ENCODE measurements at regions of chr7 and their contacts with region 1.

Region 1: DNA sequence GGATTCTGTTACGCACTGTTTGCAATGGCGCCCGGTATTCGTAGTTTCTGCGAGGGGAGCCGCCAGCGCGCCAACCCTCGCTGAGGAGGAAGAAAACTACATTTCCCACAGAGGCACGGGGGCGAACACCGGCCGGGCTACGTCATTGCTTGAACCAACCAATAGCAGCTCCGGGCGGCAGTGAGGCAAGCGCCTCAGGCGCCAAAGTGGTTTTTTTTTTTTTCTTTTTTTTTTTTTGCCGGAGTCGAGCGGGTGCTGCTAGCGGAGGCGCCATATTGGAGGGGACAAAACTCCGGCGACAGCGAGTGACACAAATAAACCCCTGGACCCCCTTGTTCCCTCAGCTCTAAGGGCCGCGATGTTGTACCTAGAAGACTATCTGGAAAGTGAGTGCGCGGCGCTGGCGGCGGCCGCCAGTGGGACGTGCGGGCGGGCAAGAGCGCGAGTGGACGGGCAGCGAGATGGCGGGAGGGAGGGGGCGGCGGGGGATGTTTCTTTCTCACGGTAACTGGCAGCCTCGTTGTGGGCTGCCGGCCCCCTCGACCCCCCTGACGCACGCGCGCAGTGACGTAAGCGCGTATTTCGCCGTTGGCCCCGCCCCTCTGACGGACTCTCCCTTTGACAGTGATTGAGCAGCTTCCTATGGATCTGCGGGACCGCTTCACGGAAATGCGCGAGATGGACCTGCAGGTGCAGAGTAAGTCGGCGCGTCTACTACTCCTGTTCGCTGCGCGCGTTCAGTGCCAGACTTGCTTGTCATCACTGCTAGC is at the start of gene ING3:
- DNase-seq: peak; percentile 94 to 100 (median 98)
- ATAC-seq: peak; percentile 85
- H3K4me3 ChIP-seq: peak within 1 kb of the TSS; percentile 71
- H3K4me3 Mint-ChIP-seq: peak within 1 kb of the TSS; percentile 98
- H3K27ac ChIP-seq: peak within 1 kb of the TSS; percentile 96 to 98
- H3K27ac Mint-ChIP-seq: peak within 1 kb of the TSS; percentile 96
- H3K4me1 ChIP-seq: peaks cover 5% of the 10 kb centered on the region
- H3K4me1 Mint-ChIP-seq: peaks cover 32% of the 10 kb centered on the region
- H3K27me3 ChIP-seq: peaks cover 0 to 3% of the 10 kb centered on the region in 2 experiments
- H3K27me3 Mint-ChIP-seq: peaks cover 9% of the 10 kb centered on the region
- CTCF ChIP-seq: no peak
- total RNA-seq, gene ING3: 37.9 to 39.3 TPM

Region 2: DNA sequence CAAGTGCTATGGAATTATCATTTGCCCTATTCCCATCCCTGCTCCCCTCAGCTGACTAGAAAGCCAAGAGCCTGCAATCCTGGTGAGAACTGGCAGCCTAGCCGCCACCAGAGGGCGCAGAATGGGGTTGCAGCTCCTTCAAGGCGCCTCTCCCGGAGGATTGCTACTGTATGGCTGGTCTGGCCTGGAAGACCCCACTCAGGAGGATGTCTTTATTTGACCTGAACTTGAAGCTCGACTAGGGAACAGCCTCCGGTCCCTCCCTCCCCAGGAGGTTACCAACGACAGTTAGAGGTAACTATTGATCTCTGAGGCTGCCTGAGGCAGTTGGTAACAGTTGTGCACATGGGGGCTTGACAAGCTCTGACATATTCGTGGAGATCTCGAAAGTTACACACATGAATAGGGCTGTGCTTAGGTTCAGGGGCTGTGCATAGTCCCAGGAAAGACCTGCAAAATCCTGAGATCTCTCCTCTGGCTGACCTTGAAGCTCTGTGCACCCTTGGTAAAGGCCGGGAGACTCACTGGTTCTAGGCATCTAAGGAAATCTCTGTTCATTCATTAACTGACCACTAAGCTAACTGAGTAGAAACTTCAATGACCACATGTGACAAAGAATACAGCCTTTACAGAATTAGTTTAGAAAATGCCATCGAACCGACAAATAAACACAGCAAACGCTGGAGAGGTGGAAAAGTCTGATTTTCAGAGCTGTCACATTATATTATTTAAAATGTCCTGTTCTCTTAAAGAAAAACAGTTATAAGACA is 158.4 kb before region 1 on chr7:
- CTCF ChIA-PET with region 1: no interaction called
- POLR2A ChIA-PET with region 1: interaction called, 3 read pairs
- intact Hi-C with region 1: loop called in 1 of 2 experiments (anchors 5 kb)
- DNase-seq: peak; percentile 22 to 69 (median 42)
- ATAC-seq: no peak
- H3K4me3 ChIP-seq: no peak overlapping the region
- H3K4me3 Mint-ChIP-seq: no peak overlapping the region
- H3K27ac ChIP-seq: no peak overlapping the region
- H3K27ac Mint-ChIP-seq: no peak overlapping the region
- H3K4me1 ChIP-seq: no peaks in the 10 kb centered on the region
- H3K4me1 Mint-ChIP-seq: no peaks in the 10 kb centered on the region
- H3K27me3 ChIP-seq: peaks cover 3 to 4% of the 10 kb centered on the region in 2 experiments
- H3K27me3 Mint-ChIP-seq: peaks cover 5% of the 10 kb centered on the region
- CTCF ChIP-seq: peak; percentile 80

Region 3: GRCh38 chr7:120805636-120806388 is 144.9 kb before region 1 on chr7:
- CTCF ChIA-PET with region 1: no interaction called
- POLR2A ChIA-PET with region 1: no interaction called
- intact Hi-C with region 1: loop called in 1 of 2 experiments (anchors 5 kb)
- DNase-seq: peak in 13 of 14 experiments; percentile 9 to 72 (median 26)
- ATAC-seq: peak; percentile 41
- H3K4me3 ChIP-seq: no peak overlapping the region
- H3K4me3 Mint-ChIP-seq: no peak overlapping the region
- H3K27ac ChIP-seq: no peak overlapping the region
- H3K27ac Mint-ChIP-seq: no peak overlapping the region
- H3K4me1 ChIP-seq: no peaks in the 10 kb centered on the region
- H3K4me1 Mint-ChIP-seq: no peaks in the 10 kb centered on the region
- H3K27me3 ChIP-seq: peaks cover 0 to 6% of the 10 kb centered on the region in 2 experiments
- H3K27me3 Mint-ChIP-seq: peaks cover 19% of the 10 kb centered on the region
- CTCF ChIP-seq: peak; percentile 84

Region 4: GRCh38 chr7:120961638-120962173 is 11.0 kb after region 1 on chr7:
- CTCF ChIA-PET with region 1: no interaction called
- POLR2A ChIA-PET with region 1: interaction called, 10 read pairs
- intact Hi-C with region 1: no loop called
- DNase-seq: no peak
- ATAC-seq: no peak
- H3K4me3 ChIP-seq: no peak overlapping the region
- H3K4me3 Mint-ChIP-seq: no peak overlapping the region
- H3K27ac ChIP-seq: no peak overlapping the region
- H3K27ac Mint-ChIP-seq: no peak overlapping the region
- H3K4me1 ChIP-seq: no peaks in the 10 kb centered on the region
- H3K4me1 Mint-ChIP-seq: peaks cover 22% of the 10 kb centered on the region
- H3K27me3 ChIP-seq: no peaks in the 10 kb centered on the region
- H3K27me3 Mint-ChIP-seq: no peaks in the 10 kb centered on the region
- CTCF ChIP-seq: no peak

Region 5: DNA sequence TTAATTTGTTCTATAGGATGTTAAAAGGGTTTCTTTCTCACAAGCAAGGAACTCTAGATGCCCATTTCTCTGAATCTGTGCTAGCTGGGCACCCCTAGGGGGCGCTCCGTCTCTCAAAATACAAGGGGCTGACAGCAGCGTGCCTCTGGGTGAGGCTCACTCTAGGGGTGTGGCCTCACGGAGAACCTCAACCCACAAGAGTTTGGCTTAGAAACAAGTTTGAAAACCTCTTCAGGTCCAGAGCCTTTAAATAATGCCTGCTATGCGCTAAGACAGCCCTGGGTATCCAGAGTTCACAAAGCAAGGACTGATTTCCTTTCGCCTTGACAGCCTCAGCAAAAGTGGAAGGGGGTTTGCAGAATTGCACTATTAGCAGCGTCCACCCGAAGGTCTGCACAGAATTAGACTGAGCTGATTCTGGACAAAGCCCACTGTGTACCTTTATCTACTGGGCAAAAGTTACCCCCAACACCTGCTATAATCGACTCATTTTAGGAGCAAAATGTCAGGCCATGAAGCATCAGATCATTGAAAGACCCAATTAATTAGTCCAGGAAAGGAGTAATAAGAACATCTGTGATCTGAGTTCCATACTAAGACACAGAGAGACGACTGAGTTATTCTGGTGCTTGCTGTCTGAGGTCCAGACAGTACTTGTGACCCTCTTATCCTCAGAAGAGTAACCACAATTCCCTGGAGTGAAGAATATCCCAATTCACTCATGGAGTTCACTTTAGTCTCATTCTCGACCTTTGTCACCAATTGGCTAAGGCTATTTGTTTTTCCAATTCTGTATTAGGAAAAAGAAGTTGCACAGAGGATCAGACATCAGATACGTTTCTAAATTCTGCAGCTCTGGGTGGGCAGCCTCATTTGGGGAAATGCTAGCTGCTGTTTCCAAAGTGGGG is 37.2 kb after region 1 on chr7:
- CTCF ChIA-PET with region 1: interaction called, 3 read pairs
- POLR2A ChIA-PET with region 1: interaction called, 9 read pairs
- intact Hi-C with region 1: loop called in 1 of 2 experiments (anchors 1 kb)
- DNase-seq: peak; percentile 77 to 94 (median 83)
- ATAC-seq: peak; percentile 100
- H3K4me3 ChIP-seq: peak overlapping the region; percentile 10
- H3K4me3 Mint-ChIP-seq: peak overlapping the region; percentile 44
- H3K27ac ChIP-seq: no peak overlapping the region
- H3K27ac Mint-ChIP-seq: no peak overlapping the region
- H3K4me1 ChIP-seq: peaks cover 20% of the 10 kb centered on the region
- H3K4me1 Mint-ChIP-seq: peaks cover 26% of the 10 kb centered on the region
- H3K27me3 ChIP-seq: peaks cover 25 to 52% of the 10 kb centered on the region in 2 experiments
- H3K27me3 Mint-ChIP-seq: peaks cover 75% of the 10 kb centered on the region
- CTCF ChIP-seq: peak; percentile 95